ENCODE measurements at regions of chr22 and their contacts with region 1.

Region 1: DNA sequence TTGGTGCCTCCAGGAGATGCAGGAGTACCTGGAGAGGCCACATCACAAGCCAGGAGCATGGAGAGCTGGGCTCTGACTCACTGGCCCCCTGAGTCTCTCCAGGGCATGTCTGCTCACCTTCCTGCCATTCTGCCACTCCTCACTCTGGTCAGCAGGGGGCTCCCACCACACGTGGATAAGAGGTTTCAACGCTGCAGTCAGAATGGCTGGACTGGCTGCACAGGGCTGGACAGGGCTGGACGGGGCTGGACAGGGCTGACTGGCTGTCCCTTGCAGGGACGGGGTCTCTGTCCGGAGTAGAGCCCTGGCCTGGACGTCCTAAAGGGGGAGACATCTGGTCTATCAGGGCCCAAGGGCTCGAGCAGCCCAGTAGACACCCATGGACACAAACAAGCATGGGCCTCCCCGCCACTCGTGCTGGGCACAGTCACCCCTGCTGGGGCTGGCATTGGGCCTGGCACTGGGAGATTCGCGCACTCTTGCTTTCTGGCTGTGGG is 34.6 kb downstream of the CYTH4 start:
- DNase-seq: peak; percentile 79 to 85 (median 85)
- ATAC-seq: peak; percentile 88 to 90 (median 88)
- H3K4me3 ChIP-seq: no peak overlapping the region
- H3K27ac ChIP-seq: no peak overlapping the region
- H3K4me1 ChIP-seq: peaks cover 0 to 13% (median 5%) of the 10 kb centered on the region in 4 donors
- H3K27me3 ChIP-seq: no peaks in the 10 kb centered on the region
- CTCF ChIP-seq: peak; percentile 81 to 97 (median 88)
- POLR2A ChIP-seq: no peak

Region 2: GRCh38 chr22:37428649-37429586 is 112.0 kb after region 1 on chr22:
- intact Hi-C with region 1: loop called (anchors 2 to 5 kb)
- DNase-seq: peak in 2 of 3 donors; percentile 55 to 65
- ATAC-seq: peak; percentile 61 to 77 (median 72)
- H3K4me3 ChIP-seq: no peak overlapping the region
- H3K27ac ChIP-seq: no peak overlapping the region
- H3K4me1 ChIP-seq: peaks cover 0 to 3% (median 0%) of the 10 kb centered on the region in 4 donors
- H3K27me3 ChIP-seq: no peaks in the 10 kb centered on the region
- CTCF ChIP-seq: peak; percentile 56 to 74 (median 73)
- POLR2A ChIP-seq: no peak

Region 3: DNA sequence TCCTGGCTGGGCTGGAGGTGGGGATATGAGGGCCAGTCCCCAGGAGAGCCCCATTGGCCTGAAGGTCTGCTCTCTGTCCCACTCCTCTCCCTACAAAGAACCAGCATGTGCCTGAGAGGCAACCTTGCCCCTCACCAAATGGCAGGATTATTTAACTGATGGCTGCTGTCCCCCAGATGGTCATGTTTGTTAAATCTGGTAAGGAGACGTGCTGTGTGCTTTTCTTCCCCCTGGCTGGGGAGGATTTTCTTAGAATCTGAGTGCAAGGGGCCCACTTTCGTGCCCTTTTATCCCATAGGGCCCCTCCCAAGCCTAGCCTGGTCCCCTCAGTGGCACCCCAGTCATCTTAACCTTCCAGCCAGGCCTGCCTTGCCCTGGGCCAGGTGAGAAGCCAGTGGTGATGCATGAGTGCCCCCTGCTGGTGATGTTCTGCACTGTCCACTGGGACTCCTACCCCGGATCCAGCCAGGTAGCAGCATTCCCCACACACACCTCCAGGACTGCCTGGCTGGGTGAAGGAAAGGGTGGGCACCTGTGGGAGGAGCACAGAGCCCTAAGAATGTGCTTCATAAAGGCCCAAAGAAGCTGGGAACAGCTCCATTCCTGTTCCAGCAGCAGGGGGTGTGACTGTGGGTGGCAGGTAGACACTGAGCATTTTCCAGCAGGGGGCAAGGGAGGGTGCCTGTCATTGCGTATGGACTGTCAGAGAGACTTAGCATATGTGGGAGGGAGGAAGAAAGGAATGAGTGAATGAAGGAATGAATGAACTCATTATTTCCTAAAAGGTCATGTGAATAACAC is 140.4 kb after region 1 on chr22:
- intact Hi-C with region 1: loop called in 1 of 2 experiments (anchors 10 kb)
- DNase-seq: peak; percentile 79 to 84 (median 81)
- ATAC-seq: peak; percentile 92 to 97 (median 94)
- H3K4me3 ChIP-seq: no peak overlapping the region
- H3K27ac ChIP-seq: no peak overlapping the region
- H3K4me1 ChIP-seq: no peaks in the 10 kb centered on the region
- H3K27me3 ChIP-seq: no peaks in the 10 kb centered on the region
- CTCF ChIP-seq: peak; percentile 89 to 97 (median 92)
- POLR2A ChIP-seq: no peak

Measured in right lobe of liver (tissue), 6 donors.